OCI-LY7 (cell line): ENCODE measurements at regions of chr2 and their contacts with region 1.

Region 1: GRCh38 chr2:3728104-3729054 is 25.0 kb downstream of the DCDC2C start:
- DNase-seq: peak; percentile 46
- H3K4me3 ChIP-seq: no peak overlapping the region
- H3K27ac ChIP-seq: no peak overlapping the region
- H3K4me1 ChIP-seq: no peaks in the 10 kb centered on the region
- CTCF ChIP-seq: peak; percentile 83

Region 2: GRCh38 chr2:3780477-3781402 is 52.4 kb after region 1 on chr2:
- CTCF ChIA-PET with region 1: interaction called, 4 read pairs
- POLR2A ChIA-PET with region 1: no interaction called
- intact Hi-C with region 1: loop called (anchors 2 kb)
- DNase-seq: peak; percentile 68
- H3K4me3 ChIP-seq: no peak overlapping the region
- H3K27ac ChIP-seq: no peak overlapping the region
- H3K4me1 ChIP-seq: peaks cover 5% of the 10 kb centered on the region
- CTCF ChIP-seq: peak; percentile 91

Region 3: GRCh38 chr2:3827673-3828575 is 99.5 kb after region 1 on chr2:
- CTCF ChIA-PET with region 1: no interaction called
- POLR2A ChIA-PET with region 1: no interaction called
- intact Hi-C with region 1: loop called (anchors 5 kb)
- DNase-seq: peak; percentile 34
- H3K4me3 ChIP-seq: no peak overlapping the region
- H3K27ac ChIP-seq: no peak overlapping the region
- H3K4me1 ChIP-seq: no peaks in the 10 kb centered on the region
- CTCF ChIP-seq: peak; percentile 90

Region 4: DNA sequence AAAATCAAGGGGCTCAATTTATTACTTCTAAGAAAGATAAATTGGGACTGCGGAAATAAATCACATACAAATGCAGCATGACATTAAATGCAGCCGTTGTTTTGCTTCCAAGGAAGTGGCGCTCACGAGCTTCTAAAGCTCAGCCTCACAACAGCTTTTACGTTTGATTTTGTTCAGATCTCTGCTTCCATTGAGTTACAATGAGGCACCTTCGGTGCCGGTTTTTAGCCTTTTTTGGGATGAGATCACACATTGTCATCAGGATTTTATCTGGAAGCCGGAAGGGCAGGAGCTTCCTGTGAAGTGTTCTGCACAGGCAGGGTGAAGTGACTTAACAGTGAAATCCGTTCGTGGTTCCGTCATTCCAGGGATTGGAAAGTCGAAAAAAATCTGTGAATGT is 184.8 kb after region 1 on chr2:
- CTCF ChIA-PET with region 1: no interaction called
- POLR2A ChIA-PET with region 1: no interaction called
- intact Hi-C with region 1: no loop called
- DNase-seq: no peak
- H3K4me3 ChIP-seq: no peak overlapping the region
- H3K27ac ChIP-seq: no peak overlapping the region
- H3K4me1 ChIP-seq: no peaks in the 10 kb centered on the region
- CTCF ChIP-seq: no peak